Right ventricle myocardium superior (tissue), 1 donor: ENCODE measurements at regions of chr3 and their contacts with region 1.

Region 1: DNA sequence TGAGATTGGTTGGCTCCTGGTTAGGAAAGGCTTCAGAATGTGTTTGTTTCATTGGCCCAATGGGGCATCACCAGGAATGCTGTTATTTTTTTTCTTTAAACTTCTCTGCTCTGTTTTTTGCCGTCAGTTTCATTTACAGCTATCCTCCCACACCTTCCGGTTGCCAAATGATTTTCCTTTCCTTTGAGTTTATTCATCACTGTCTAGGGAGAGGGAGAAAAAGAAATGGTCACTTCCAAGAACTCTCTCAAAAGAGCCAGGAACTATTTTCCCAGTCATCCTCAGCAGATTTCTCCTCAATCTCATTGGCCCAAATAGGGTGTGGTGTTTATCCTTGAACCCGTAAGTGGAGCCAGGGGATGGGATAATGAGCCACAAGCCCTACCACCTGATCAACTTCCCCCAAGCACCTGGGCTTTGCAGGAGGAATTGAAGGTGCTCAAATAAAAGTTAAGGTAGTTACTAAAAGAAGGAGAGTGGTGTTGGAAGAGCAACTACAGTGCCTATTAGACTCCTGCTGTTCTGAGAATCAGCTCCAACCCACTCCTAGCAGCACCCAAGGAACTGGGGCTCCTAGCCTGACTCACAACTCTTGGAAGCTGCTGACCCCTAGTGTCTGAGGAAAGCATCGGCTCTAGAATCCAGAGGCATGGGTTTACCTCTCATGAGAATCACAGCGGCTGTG is 183.8 kb upstream of the IL12A start:
- DNase-seq: peak; percentile 53
- ATAC-seq: peak; percentile 93

Region 2: DNA sequence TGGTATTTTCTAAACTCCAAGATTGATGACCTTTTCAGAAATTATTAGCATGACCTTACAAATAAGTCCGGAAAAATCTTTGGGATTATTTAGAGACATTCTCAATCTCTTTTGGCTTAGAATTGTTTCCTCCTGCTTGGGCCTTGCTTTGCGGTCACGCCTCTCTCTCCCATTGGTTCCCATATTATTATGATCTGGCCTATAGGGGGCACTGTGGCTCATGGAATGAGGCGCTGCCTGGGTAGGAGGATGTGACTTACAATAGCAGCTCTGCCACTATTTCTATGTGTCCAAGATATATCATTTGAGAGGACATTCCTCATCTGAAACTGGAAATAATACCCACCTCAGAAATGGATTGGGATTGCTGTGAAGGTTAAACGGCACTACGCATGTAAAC is 538.1 kb before region 1 on chr3:
- intact Hi-C with region 1: loop called (anchors 5 kb)
- DNase-seq: no peak
- ATAC-seq: no peak

Region 3: GRCh38 chr3:159616212-159616825 is 188.5 kb before region 1 on chr3:
- intact Hi-C with region 1: loop called (anchors 5 kb)
- DNase-seq: peak; percentile 53
- ATAC-seq: peak; percentile 88

Region 4: GRCh38 chr3:159634483-159634882 is 170.4 kb before region 1 on chr3:
- intact Hi-C with region 1: no loop called
- DNase-seq: no peak
- ATAC-seq: no peak